PC-3 (cell line): ENCODE measurements at regions of chr11 and their contacts with region 1.

Region 1: DNA sequence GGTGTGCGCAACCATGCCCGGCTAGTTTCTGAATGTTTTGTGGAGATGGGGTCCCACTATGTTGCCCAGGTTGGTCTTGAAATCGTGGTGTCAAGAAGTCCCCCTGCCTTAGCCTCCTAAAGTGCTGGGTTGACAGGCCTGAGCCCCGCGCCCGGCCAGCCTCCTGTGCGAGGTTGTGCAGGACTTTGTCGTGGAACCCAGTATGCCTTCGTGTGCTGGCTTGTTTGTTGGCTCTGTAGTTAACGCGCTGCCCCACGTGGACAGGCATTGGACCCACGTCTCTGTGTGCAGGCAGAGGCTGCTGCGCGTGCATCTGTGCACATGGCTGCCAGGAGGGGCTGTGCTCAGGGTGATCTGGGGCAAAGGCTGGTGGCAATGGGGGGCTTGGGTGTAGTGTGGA is 33.9 kb upstream of the ZNF195 start:
- DNase-seq: no peak
- ATAC-seq: no peak
- H3K4me3 ChIP-seq: no peak overlapping the region
- H3K27ac ChIP-seq: no peak overlapping the region
- H3K4me1 ChIP-seq: no peaks in the 10 kb centered on the region
- H3K27me3 ChIP-seq: no peaks in the 10 kb centered on the region
- CTCF ChIP-seq: no peak

Region 2: GRCh38 chr11:3215346-3216045 is 197.3 kb before region 1 on chr11:
- CTCF ChIA-PET with region 1: no interaction called
- POLR2A ChIA-PET with region 1: no interaction called
- intact Hi-C with region 1: no loop called
- DNase-seq: no peak
- ATAC-seq: no peak
- H3K4me3 ChIP-seq: no peak overlapping the region
- H3K27ac ChIP-seq: no peak overlapping the region
- H3K4me1 ChIP-seq: no peaks in the 10 kb centered on the region
- H3K27me3 ChIP-seq: peaks cover 21% of the 10 kb centered on the region
- CTCF ChIP-seq: no peak

Region 3: DNA sequence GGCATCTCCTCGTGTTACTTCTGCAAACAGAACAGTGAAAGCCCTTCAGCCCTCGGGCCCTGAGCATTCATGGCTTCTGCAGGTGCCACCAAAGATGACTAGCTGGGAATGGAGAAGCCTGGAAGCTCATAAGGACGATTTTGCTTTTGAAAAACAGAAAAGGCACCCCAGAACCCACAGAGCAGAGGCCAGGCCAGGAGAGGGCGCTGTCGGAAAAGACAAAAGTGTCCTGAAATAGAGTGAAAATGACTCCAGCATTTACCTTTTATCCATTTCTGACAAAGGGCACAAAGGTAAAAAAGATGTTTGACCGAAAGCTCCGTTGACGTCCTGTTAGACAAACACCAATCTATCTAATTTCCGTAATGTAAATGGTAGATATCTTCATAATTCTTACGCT is 71.5 kb before region 1 on chr11:
- CTCF ChIA-PET with region 1: interaction called, 18 read pairs
- POLR2A ChIA-PET with region 1: no interaction called
- intact Hi-C with region 1: loop called (anchors 10 kb)
- DNase-seq: peak; percentile 65
- ATAC-seq: peak; percentile 66
- H3K4me3 ChIP-seq: no peak overlapping the region
- H3K27ac ChIP-seq: no peak overlapping the region
- H3K4me1 ChIP-seq: 0 out of 2 replicates have a peak, but pooled peaks cover 6% of the 10 kb centered on the region
- H3K27me3 ChIP-seq: peaks cover 24% of the 10 kb centered on the region
- CTCF ChIP-seq: peak; percentile 83

Region 4: DNA sequence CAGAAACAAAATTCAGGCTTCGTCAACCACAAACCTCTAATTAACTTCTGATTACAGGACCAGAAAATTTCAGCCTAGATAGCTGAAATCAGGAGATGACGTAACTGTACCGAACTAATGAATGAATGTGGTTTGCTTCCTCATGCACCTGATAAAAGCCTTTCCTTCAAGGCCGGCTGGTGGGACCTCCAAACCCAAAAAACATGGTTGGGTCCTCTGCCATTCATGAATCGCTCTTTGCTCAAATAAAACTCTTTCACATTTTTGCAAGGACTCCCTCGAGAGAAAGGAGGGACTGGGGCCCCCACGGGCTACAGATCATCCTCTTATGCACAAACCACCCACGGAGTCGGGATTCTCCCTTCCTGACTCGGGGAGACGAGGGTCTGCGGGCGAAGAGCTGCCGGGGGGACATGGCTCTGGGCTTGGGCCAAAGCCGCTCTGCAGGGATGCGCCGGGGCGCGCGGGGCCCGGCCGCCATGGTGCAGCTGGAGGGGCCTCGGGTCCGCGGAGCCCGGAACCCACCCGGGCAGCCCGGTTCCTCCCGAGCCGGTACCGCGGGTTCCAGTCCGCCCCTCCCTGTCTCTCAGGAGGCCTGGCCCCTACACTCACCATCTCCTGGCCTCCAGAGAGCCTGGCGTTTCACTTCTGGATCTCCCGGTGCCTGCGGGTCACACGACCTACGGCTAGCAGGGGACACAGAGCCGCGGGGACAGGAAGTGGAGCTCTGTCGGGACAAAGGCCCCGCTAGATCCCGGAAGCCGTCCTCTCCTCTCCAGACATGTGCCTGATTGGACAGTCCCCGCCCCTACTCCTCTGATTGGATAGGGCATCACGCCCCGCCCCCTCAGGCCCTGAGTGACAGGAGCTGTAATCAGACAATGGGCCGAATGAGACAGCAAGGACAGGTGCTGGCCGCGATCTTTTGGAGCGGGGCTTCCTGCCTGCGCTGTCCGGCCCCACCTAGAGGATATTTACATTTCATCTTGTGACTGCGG is 34.1 kb before region 1 on chr11 and contains the start of gene ZNF195:
- CTCF ChIA-PET with region 1: interaction called, 13 read pairs
- POLR2A ChIA-PET with region 1: no interaction called
- intact Hi-C with region 1: no loop called
- DNase-seq: peak; percentile 96
- ATAC-seq: peak; percentile 100
- H3K4me3 ChIP-seq: peak within 1 kb of the TSS; percentile 100
- H3K27ac ChIP-seq: peak within 1 kb of the TSS; percentile 33
- H3K4me1 ChIP-seq: peaks cover 12% of the 10 kb centered on the region
- H3K27me3 ChIP-seq: no peaks in the 10 kb centered on the region
- CTCF ChIP-seq: no peak
- total RNA-seq, gene ZNF195: 45.8 and 47.9 TPM in 2 replicates

Region 5: GRCh38 chr11:3817181-3817800 is 404.5 kb after region 1 on chr11:
- CTCF ChIA-PET with region 1: interaction called, 16 read pairs
- POLR2A ChIA-PET with region 1: no interaction called
- intact Hi-C with region 1: no loop called
- DNase-seq: no peak
- ATAC-seq: no peak
- H3K4me3 ChIP-seq: no peak overlapping the region
- H3K27ac ChIP-seq: no peak overlapping the region
- H3K4me1 ChIP-seq: no peaks in the 10 kb centered on the region
- H3K27me3 ChIP-seq: no peaks in the 10 kb centered on the region
- CTCF ChIP-seq: no peak